ENCODE measurements at regions of chr1 and their contacts with region 1.

Region 1: GRCh38 chr1:101920577-101920976 is 76.1 kb downstream of the OLFM3 start:
- DNase-seq: no peak

Region 2: DNA sequence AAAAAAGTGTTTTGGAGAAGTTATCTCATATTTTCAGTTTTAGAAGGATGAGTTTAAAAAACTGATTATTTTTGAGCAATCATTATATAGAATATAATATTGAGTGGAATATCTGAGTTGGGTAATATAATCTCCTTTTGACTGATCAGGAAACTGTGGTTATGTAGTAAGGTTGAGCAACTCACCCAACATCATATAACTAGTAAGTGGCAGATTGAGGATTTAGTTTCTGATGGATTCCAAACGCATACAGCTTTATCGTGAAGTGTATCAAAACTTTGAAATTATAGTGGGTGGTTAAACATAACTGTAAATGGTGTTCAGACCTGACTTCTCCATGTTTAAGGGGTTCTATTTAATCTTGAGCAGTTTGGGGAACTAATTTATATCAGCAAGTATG is 22.4 kb before region 1 on chr1:
- intact Hi-C with region 1: loop called in 1 of 2 experiments (anchors 1 kb)
- DNase-seq: no peak